Ovary (tissue), 10 donors: ENCODE measurements at regions of chr6 and their contacts with region 1.

Region 1: GRCh38 chr6:111259089-111259831 is 172.0 kb downstream of the SLC16A10 start:
- DNase-seq: peak; percentile 99
- H3K4me3 ChIP-seq: peak overlapping the region; percentile 85
- H3K27ac ChIP-seq: peak overlapping the region; percentile 51 to 83
- H3K4me1 ChIP-seq: peaks cover 8% of the 10 kb centered on the region
- H3K27me3 ChIP-seq: no peaks in the 10 kb centered on the region
- CTCF ChIP-seq: peak; percentile 91 to 97 (median 96)
- EP300 ChIP-seq: no peak
- POLR2A ChIP-seq: peak; percentile 73

Region 2: DNA sequence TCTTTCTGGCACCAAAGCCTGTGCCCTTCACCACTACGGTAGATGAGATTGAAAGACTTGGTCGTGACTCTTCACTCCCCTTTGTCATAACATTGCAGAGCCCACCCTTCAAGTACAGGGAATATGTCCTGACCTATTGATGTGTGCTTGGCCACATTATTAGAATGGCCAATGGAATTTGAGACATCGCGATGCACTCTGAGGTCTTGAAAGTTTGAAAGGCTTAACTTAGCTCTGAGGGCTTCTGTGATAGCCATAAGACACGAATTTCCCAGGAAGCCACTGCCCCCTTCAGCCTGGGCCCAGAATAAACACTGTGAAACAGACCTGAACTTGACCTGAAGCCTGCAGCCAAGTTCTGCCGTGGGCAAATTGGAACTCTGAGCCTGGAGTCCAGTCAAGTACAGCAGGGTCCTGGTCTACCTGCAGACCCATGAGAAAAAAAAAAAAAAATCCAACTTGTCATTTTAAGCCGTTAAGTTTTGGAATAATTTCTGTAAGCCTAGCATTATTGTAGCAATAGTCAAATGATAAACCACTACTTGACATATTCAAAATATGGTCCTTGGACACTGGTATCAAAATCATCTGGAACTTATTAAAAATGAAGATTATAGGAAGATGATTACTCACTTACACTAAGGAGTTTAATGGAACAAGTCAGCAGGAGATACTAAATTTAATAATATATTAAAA is 383.4 kb after region 1 on chr6:
- intact Hi-C with region 1: loop called in 1 of 4 experiments (anchors 5 kb)
- DNase-seq: peak in 1 of 5 donors; percentile 45
- H3K4me3 ChIP-seq: no peak overlapping the region
- H3K27ac ChIP-seq: no peak overlapping the region
- H3K4me1 ChIP-seq: peaks cover 7% of the 10 kb centered on the region
- H3K27me3 ChIP-seq: no peaks in the 10 kb centered on the region
- CTCF ChIP-seq: peak in 1 of 3 donors; percentile 34
- EP300 ChIP-seq: no peak
- POLR2A ChIP-seq: no peak

Region 3: DNA sequence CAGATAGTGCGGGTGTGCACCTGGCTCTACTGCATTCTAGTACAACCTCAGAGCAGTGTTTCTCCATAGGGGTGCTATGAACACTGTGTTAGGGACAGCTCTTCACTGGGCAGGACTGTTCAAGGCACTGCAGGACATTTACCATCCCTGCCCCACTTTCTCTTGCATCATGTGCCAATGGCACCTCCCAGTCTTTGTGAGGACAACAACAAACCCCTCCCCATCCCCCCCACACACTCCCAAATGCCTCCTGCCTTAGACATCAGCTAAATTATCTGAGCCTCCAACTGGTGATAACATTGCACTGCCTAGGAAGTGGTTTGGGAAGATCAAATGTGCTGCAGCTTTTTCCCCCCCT is 515.1 kb after region 1 on chr6:
- intact Hi-C with region 1: no loop called
- DNase-seq: no peak
- H3K4me3 ChIP-seq: no peak overlapping the region
- H3K27ac ChIP-seq: no peak overlapping the region
- H3K4me1 ChIP-seq: peaks cover 15% of the 10 kb centered on the region
- H3K27me3 ChIP-seq: no peaks in the 10 kb centered on the region
- CTCF ChIP-seq: no peak
- EP300 ChIP-seq: no peak
- POLR2A ChIP-seq: no peak

Region 4: GRCh38 chr6:112279031-112279935 is 1020.0 kb after region 1 on chr6:
- intact Hi-C with region 1: no loop called
- DNase-seq: no peak
- H3K4me3 ChIP-seq: no peak overlapping the region
- H3K27ac ChIP-seq: no peak overlapping the region
- H3K4me1 ChIP-seq: peaks cover 8% of the 10 kb centered on the region
- H3K27me3 ChIP-seq: no peaks in the 10 kb centered on the region
- CTCF ChIP-seq: no peak
- EP300 ChIP-seq: no peak
- POLR2A ChIP-seq: no peak